Activated CD4-positive, alpha-beta T cell treated with anti-CD3 and anti-CD28 coated beads for 36 hours (primary cell): ENCODE measurements at regions of chr5 and their contacts with region 1.

Region 1: DNA sequence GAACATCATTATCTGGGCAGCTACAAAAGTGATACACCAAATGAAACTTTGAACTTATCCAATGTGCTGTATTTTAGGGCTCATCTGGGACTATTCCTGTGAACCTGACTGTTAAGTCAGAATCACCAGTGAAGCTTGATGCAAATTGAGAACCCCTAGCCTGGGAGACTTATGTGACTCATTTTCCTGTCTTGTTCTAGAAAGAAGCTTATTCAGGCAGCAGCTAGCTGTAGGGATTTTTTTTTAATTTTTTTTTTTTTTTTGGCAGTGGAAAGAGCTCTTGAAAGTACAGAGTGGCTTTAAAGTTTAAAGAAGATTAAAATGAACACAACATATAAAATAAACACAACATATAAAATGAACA is 81.1 kb upstream of the TNFAIP8 start:
- DNase-seq: no peak
- ATAC-seq: peak; percentile 65
- H3K4me3 Mint-ChIP-seq: peak overlapping the region; percentile 96
- H3K27ac Mint-ChIP-seq: peak overlapping the region; percentile 96
- H3K4me1 Mint-ChIP-seq: peaks cover 87% of the 10 kb centered on the region
- H3K27me3 Mint-ChIP-seq: no peaks in the 10 kb centered on the region

Region 2: GRCh38 chr5:119290161-119290569 is 15.4 kb after region 1 on chr5:
- CTCF ChIA-PET with region 1: interaction called, 10 read pairs
- POLR2A ChIA-PET with region 1: interaction called, 3 read pairs
- intact Hi-C with region 1: loop called (anchors 1 kb)
- DNase-seq: no peak
- ATAC-seq: peak; percentile 55
- H3K4me3 Mint-ChIP-seq: peak overlapping the region; percentile 0
- H3K27ac Mint-ChIP-seq: peak overlapping the region; percentile 93
- H3K4me1 Mint-ChIP-seq: peaks cover 84% of the 10 kb centered on the region
- H3K27me3 Mint-ChIP-seq: no peaks in the 10 kb centered on the region

Region 3: DNA sequence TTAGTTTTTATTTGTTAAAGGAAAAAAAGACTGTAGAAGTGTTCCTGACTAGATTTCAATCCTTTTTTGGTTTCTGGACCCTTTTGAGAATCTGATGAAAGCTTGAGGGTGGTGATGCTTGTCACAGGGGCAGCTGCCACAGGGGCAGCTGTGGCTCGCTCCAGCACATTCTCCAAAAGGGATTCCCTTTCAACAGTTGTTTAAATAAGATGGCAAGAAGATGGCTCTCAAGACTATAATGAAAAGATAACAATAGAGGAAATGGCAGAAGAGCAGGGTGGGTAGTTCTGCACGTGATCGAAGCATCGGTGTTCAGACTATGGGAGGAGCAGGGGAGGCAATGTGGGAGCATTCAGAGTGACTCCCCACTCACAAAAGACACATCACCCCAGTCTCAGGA is 34.6 kb after region 1 on chr5:
- CTCF ChIA-PET with region 1: interaction called, 5 read pairs
- POLR2A ChIA-PET with region 1: no interaction called
- intact Hi-C with region 1: loop called (anchors 1 to 2 kb)
- DNase-seq: no peak
- ATAC-seq: no peak
- H3K4me3 Mint-ChIP-seq: peak overlapping the region; percentile 53
- H3K27ac Mint-ChIP-seq: peak overlapping the region; percentile 91
- H3K4me1 Mint-ChIP-seq: peaks cover 91% of the 10 kb centered on the region
- H3K27me3 Mint-ChIP-seq: no peaks in the 10 kb centered on the region

Region 4: DNA sequence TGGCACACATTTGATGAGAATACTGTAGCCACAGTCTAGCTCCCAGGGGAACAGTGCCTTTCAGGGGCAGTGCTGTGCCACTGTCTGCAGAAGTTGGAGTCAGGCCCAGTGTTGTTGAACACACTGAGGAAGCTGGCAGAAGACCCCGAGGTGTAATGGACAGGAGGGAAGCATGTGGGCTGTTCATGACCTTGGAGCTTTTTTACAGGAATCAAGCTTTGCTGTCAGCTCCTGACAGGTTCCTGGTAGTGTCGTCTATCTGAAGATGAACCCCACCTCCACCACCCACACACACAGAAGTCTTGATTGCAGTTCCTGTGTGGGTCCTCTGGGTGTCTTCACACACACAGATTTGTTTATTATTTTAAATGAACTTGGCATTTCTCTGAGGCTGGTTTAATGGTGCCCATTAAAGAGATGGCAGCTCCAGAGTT is 40.8 kb after region 1 on chr5:
- CTCF ChIA-PET with region 1: interaction called, 12 read pairs
- POLR2A ChIA-PET with region 1: interaction called, 5 read pairs
- intact Hi-C with region 1: no loop called
- DNase-seq: peak; percentile 78
- ATAC-seq: peak; percentile 77
- H3K4me3 Mint-ChIP-seq: peak overlapping the region; percentile 28
- H3K27ac Mint-ChIP-seq: peak overlapping the region; percentile 91
- H3K4me1 Mint-ChIP-seq: peaks cover 91% of the 10 kb centered on the region
- H3K27me3 Mint-ChIP-seq: no peaks in the 10 kb centered on the region

Region 5: DNA sequence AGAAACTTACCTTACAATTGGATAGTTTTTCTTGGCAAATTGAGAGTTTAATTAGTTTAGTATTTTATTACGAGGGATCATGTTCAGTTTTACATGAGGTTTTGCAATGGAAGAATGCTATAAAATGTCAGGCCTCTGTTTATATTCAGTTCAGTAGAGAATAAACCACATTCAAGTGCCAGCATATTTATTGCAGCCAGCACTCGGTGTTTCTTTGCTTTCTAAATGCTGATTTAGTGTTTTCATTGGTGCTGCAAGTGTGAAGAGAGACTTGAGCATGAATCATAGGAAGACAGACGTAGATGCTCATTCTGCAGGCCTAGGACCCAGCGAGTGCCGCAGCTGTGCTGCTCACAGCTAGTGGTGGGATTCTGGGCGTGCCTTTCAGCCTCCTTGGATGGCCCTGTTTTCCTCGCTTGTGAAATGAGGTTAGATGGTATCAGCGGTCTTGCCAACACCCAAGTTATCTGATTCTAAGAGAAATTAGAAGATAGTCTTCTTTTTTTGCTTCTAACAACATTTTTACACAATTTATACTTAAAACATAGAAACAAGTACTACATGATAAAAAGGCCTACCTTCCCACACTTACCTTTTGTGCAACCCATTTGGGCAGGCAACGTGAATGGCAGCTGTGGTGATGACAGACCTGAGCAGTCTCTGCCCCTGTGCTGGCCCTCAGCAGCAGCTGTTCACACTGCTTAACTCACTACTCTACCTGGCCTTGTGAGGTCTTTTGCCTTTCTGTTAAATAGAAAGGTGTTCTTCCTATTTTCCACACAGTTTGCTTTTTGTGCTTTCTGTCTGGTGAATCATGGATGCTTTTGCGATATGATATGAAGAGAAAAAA is 54.2 kb after region 1 on chr5:
- CTCF ChIA-PET with region 1: interaction called, 3 read pairs
- POLR2A ChIA-PET with region 1: interaction called, 5 read pairs
- intact Hi-C with region 1: loop called in 1 of 2 experiments (anchors 2 kb)
- DNase-seq: peak; percentile 80
- ATAC-seq: peak; percentile 58
- H3K4me3 Mint-ChIP-seq: peak overlapping the region; percentile 45
- H3K27ac Mint-ChIP-seq: peak overlapping the region; percentile 98
- H3K4me1 Mint-ChIP-seq: peaks cover 96% of the 10 kb centered on the region
- H3K27me3 Mint-ChIP-seq: no peaks in the 10 kb centered on the region

Region 6: GRCh38 chr5:119355685-119356611 is 81.2 kb after region 1 on chr5 and contains the start of gene TNFAIP8:
- CTCF ChIA-PET with region 1: interaction called, 4 read pairs
- POLR2A ChIA-PET with region 1: interaction called, 9 read pairs
- intact Hi-C with region 1: loop called in 1 of 2 experiments (anchors 1 kb)
- DNase-seq: peak; percentile 91
- ATAC-seq: peak; percentile 65
- H3K4me3 Mint-ChIP-seq: peak within 1 kb of the TSS; percentile 98
- H3K27ac Mint-ChIP-seq: peak within 1 kb of the TSS; percentile 99
- H3K4me1 Mint-ChIP-seq: peaks cover 62% of the 10 kb centered on the region
- H3K27me3 Mint-ChIP-seq: no peaks in the 10 kb centered on the region
- total RNA-seq, gene TNFAIP8: 166 to 171 TPM

Region 7: DNA sequence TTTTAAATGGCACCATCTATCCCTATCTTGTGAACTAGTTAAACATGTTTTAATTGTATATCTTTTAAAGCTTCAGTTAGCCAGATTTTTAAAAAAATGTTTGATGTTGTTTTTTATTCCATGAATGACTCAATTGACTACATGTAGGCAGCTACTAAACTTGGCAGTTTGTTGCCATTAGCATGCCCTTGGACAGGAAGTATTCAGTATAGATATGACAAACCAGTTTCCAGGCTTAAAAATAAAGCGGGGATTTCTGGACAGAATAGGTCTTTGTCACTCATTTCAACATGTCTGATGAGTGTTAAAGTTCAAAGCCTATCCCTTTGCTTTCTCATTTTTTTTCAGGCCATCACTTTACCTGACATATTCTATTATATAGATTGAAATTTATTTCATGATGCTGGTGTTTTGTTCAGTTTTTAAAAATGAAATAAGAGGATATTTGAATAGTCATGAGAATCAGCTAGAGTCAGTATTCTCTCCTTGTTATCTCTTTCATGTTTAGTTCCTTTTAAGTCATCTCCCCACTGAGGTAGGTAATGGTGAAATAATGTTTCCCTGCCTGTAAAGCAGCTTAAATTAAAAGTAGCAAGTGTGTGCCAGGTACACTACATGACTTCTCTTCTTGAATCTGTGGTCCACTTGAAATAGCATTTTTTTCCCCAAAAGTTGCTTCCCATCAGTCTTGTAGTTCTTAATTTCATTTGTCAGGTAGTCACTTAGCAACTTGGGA is 92.9 kb after region 1 on chr5:
- CTCF ChIA-PET with region 1: interaction called, 4 read pairs
- POLR2A ChIA-PET with region 1: interaction called, 3 read pairs
- intact Hi-C with region 1: loop called in 1 of 2 experiments (anchors 1 kb)
- DNase-seq: peak; percentile 25
- ATAC-seq: peak; percentile 69
- H3K4me3 Mint-ChIP-seq: peak overlapping the region; percentile 57
- H3K27ac Mint-ChIP-seq: peak overlapping the region; percentile 95
- H3K4me1 Mint-ChIP-seq: peaks cover 89% of the 10 kb centered on the region
- H3K27me3 Mint-ChIP-seq: no peaks in the 10 kb centered on the region